RWPE1 (cell line): ENCODE measurements at regions of chr4 and their contacts with region 1.

Region 1: DNA sequence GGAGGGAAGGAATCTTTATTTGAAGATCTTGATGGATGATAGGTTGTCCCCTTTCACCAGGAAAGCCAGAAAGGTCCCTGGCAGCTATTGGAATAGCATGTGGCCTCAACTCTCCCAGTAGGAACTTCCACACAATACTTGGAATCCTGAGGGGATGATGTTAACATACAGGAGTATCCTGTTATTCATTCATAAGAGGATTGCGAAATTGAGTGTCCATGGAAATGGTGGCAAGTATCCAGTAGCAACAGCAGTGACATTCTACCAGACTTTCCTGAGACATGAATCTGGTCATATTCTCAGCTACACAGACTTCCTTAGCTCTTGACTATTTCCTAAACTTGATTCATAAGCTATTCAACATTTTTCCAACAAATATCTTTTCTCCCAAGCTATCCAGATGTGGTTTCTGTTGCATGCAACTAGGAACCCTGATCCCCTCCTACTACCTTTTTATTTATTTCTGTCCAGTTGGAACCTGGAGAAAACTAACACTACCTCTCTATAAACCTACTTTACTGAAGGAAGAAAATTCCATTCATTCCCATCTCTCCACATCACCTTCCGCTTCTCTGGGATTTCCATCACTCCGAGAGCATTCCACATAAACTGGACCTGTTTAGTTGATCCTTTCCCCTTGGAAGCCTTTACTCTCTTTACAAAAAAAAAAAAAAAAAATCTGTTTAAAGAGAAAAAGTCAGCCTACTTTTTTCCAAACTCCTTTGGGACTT is 101.8 kb downstream of the ANXA5 start:
- DNase-seq: no peak
- H3K27ac ChIP-seq: no peak overlapping the region
- CTCF ChIP-seq: no peak

Region 2: GRCh38 chr4:120921456-120922380 is 673.2 kb before region 1 on chr4:
- CTCF ChIA-PET with region 1: no interaction called
- POLR2A ChIA-PET with region 1: no interaction called
- DNase-seq: peak; percentile 69
- H3K27ac ChIP-seq: peak overlapping the region; percentile 95
- CTCF ChIP-seq: no peak

Region 3: GRCh38 chr4:121514443-121514842 is 80.5 kb before region 1 on chr4:
- CTCF ChIA-PET with region 1: no interaction called
- POLR2A ChIA-PET with region 1: no interaction called
- DNase-seq: no peak
- H3K27ac ChIP-seq: no peak overlapping the region
- CTCF ChIP-seq: no peak

Region 4: DNA sequence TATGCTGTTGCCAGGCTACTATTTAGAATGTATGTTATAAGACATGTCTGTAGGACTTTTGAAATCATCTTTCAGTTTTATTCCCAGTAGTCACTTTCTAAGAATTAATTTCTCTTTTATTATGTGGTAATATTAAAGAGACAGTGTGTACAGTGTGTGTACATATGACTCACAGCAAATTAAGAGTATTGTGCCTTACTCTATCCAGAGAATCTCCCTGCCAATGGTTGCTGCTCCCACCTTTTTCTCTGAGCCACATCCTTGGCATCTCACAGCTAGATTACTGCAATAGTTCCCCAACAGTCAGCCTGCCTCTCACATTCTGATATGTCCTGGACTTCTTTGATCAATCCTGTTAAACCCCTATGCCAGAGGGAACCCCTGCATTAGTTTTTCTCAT is 12.7 kb before region 1 on chr4:
- CTCF ChIA-PET with region 1: interaction called, 10 read pairs
- POLR2A ChIA-PET with region 1: no interaction called
- DNase-seq: peak; percentile 5
- H3K27ac ChIP-seq: no peak overlapping the region
- CTCF ChIP-seq: no peak

Region 5: GRCh38 chr4:121690001-121690400 is 95.0 kb after region 1 on chr4:
- CTCF ChIA-PET with region 1: no interaction called
- POLR2A ChIA-PET with region 1: no interaction called
- DNase-seq: no peak
- H3K27ac ChIP-seq: peak overlapping the region; percentile 78
- CTCF ChIP-seq: no peak

Region 6: GRCh38 chr4:122086338-122087065 is 491.5 kb after region 1 on chr4:
- CTCF ChIA-PET with region 1: no interaction called
- POLR2A ChIA-PET with region 1: no interaction called
- DNase-seq: no peak
- H3K27ac ChIP-seq: no peak overlapping the region
- CTCF ChIP-seq: no peak